H1 (cell line): ENCODE measurements at regions of chrX and their contacts with region 1.

Region 1: GRCh38 chrX:71998836-71999509 is 88.3 kb downstream of the NHSL2 start:
- DNase-seq: no peak
- H3K4me3 ChIP-seq: no peak overlapping the region
- H3K27ac ChIP-seq: no peak overlapping the region
- H3K4me1 ChIP-seq: peaks cover 5 to 17% (median 14%) of the 10 kb centered on the region in 4 experiments; a peak in 5 of 7 replicates
- H3K27me3 ChIP-seq: no peaks in the 10 kb centered on the region
- CTCF ChIP-seq: peak in 2 of 3 experiments; percentile 28 to 49; a peak in 2 of 4 replicates
- EP300 ChIP-seq: no peak
- POLR2A ChIP-seq: no peak
- RAD21 ChIP-seq: peak; percentile 26 to 43; a peak in 2 of 4 replicates

Region 2: DNA sequence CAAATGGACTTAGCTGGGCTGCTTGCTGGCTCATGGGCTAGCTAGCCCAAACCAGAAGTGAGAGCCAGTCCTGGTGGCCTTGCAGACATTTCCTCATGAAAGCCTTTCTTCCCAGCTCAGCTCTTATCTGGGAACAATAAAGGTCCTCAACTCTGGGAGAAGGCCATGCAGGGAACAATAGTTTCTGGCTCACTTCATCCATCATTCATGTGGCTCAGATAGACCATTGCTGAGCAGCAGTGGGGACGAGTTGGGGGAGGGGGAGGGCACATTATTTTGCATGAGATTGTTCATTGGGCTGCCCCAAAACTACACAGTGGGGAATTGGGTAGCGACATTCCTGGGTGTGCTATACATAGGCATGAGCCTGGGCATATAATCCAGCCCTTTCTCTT is 40.7 kb before region 1 on chrX:
- CTCF ChIA-PET with region 1: interaction called, 9 read pairs
- POLR2A ChIA-PET with region 1: interaction called, 13 read pairs
- DNase-seq: no peak
- H3K4me3 ChIP-seq: peak overlapping the region in 3 of 4 experiments; percentile 50 to 56 (median 55); a peak in 6 of 8 replicates
- H3K27ac ChIP-seq: peak overlapping the region; percentile 96
- H3K4me1 ChIP-seq: peaks cover 10 to 24% (median 24%) of the 10 kb centered on the region in 4 experiments
- H3K27me3 ChIP-seq: no peaks in the 10 kb centered on the region
- CTCF ChIP-seq: no peak
- EP300 ChIP-seq: no peak
- POLR2A ChIP-seq: no peak; a peak in 1 of 3 replicates
- RAD21 ChIP-seq: no peak

Region 3: DNA sequence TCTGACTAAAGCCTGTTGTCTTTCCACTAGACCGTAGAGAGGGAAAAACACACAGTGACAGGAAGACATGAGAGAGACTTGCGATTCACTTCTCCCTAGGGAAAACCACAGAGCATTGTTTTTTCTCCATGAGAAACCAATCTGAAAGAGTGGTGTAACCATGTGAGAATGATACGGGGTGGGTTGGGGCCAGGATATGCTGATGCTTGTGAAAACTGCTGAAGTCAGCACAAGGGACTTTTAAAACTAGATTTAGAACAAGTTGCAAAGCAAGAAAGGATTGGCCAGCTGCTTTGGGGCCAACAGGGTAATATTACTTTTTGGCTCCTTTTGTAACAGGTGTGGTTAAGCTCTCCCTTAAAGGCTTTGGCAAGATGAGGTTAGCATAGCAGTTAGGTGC is 22.2 kb before region 1 on chrX:
- CTCF ChIA-PET with region 1: interaction called, 16 read pairs
- POLR2A ChIA-PET with region 1: no interaction called
- DNase-seq: no peak
- H3K4me3 ChIP-seq: no peak overlapping the region
- H3K27ac ChIP-seq: no peak overlapping the region
- H3K4me1 ChIP-seq: peaks cover 0 to 7% (median 1%) of the 10 kb centered on the region in 4 experiments; a peak in 2 of 7 replicates
- H3K27me3 ChIP-seq: no peaks in the 10 kb centered on the region
- CTCF ChIP-seq: no peak
- EP300 ChIP-seq: no peak
- POLR2A ChIP-seq: no peak
- RAD21 ChIP-seq: no peak

Region 4: GRCh38 chrX:72126539-72127140 is 127.7 kb after region 1 on chrX:
- CTCF ChIA-PET with region 1: interaction called, 10 read pairs
- POLR2A ChIA-PET with region 1: no interaction called
- DNase-seq: peak; percentile 57 to 90
- H3K4me3 ChIP-seq: no peak overlapping the region
- H3K27ac ChIP-seq: no peak overlapping the region
- H3K4me1 ChIP-seq: peaks cover 6 to 16% (median 11%) of the 10 kb centered on the region in 4 experiments
- H3K27me3 ChIP-seq: peaks cover 12 to 29% (median 24%) of the 10 kb centered on the region in 4 experiments
- CTCF ChIP-seq: peak in 2 of 3 experiments; percentile 72 to 79; a peak in 3 of 4 replicates
- EP300 ChIP-seq: no peak
- POLR2A ChIP-seq: no peak
- RAD21 ChIP-seq: peak; percentile 84 to 86